ENCODE measurements at regions of chr7 and their contacts with region 1.

Region 1: DNA sequence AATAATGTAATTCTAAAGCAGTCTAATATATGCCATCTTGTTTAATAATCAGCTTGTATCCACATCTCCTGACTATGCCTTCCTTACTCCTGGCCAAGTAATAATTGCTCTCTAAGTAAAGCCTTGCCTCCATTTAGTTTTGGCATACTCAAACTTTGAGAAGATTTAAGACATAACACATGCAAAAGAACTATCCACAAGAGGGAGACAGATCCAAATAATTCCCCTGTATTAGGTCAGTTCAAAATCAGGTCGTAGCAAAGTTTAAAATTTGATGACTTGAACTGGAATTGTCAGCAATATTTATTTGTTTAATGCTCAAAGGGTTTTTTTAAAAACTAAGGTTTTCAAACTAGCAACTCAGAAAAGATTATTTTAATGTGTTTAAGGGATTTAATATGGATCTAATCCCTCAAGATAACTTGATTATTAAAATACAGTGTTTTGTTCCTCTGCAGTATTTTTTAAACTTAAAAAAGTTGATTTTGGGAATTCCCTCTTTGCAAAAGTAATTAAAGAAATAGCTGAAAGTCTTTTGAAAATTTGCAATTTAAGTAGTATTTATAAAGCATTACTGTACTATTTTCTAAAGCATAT is 95.3 kb downstream of the HDAC9 start:
- DNase-seq: peak; percentile 67
- ATAC-seq: peak; percentile 80
- H3K4me3 ChIP-seq: no peak overlapping the region
- H3K27ac ChIP-seq: no peak overlapping the region
- H3K4me1 ChIP-seq: 0 out of 2 replicates have a peak, but pooled peaks cover 1% of the 10 kb centered on the region
- H3K27me3 ChIP-seq: no peaks in the 10 kb centered on the region
- CTCF ChIP-seq: peak; percentile 68
- POLR2A ChIP-seq: no peak
- RAD21 ChIP-seq: peak; percentile 81

Region 2: DNA sequence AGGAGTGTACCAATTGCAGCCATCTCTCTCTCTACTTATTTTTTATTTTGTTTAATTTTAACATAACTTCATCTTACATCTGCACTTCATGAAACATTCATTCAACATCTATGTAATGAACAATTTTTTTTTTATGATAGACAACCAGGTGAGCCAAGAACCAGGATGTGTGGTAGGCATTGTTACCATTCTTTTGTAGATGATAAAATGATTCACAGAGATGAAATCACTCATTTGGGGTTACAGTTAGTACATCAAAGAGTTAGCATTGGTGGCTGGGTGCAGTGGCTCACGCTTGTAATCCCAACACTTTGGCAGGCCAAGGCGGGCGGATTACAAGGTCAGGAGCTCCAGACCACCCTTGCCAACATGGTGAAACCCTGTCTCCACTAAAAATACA is 32.5 kb after region 1 on chr7:
- CTCF ChIA-PET with region 1: no interaction called
- POLR2A ChIA-PET with region 1: no interaction called
- dilution Hi-C with region 1: no loop called
- in situ Hi-C with region 1: no loop called
- intact Hi-C with region 1: no loop called
- DNase-seq: no peak
- ATAC-seq: no peak
- H3K4me3 ChIP-seq: no peak overlapping the region
- H3K27ac ChIP-seq: no peak overlapping the region
- H3K4me1 ChIP-seq: no peaks in the 10 kb centered on the region
- H3K27me3 ChIP-seq: no peaks in the 10 kb centered on the region
- CTCF ChIP-seq: no peak
- POLR2A ChIP-seq: no peak
- RAD21 ChIP-seq: no peak

Region 3: DNA sequence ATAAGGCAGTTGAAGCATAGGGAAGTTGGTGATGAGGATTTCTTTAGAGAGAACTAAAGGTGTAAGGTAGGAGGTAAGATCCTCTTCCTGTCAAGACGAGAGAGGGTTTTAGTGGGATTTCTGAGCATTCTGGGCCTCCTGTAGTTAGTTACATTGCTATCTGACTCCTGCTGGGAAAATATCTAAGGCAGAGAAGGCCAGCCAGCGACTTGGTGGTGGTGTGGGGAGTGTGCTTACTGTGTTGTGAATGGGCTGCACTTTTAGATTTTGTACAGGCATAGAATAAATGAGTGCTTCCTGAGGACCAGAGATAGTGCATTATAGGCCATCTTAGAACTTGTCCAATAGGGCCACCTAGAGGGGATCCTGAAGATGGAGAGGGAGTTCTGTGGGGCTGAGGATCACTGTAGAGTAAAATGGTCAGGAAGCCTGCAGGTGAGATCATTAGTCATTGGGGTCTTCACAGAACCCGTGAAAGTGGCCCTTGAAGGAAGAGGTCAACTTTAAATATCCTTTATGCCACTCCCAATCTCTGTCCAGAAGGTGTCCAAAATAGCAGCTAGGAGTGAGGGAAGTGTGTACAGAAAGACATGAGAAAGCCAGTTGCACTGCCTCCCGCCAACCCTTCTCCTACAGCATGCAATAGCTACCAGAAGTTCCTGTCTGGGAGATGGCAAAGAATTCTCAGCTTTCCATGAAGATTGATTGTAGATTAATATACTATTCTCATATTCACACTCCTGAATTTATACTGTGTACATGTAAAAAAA is 851.4 kb after region 1 on chr7:
- CTCF ChIA-PET with region 1: no interaction called
- POLR2A ChIA-PET with region 1: no interaction called
- dilution Hi-C with region 1: no loop called
- in situ Hi-C with region 1: no loop called
- intact Hi-C with region 1: loop called (anchors 1 kb)
- DNase-seq: peak; percentile 75
- ATAC-seq: peak; percentile 99
- H3K4me3 ChIP-seq: no peak overlapping the region
- H3K27ac ChIP-seq: no peak overlapping the region
- H3K4me1 ChIP-seq: no peaks in the 10 kb centered on the region
- H3K27me3 ChIP-seq: no peaks in the 10 kb centered on the region
- CTCF ChIP-seq: peak; percentile 83
- POLR2A ChIP-seq: no peak
- RAD21 ChIP-seq: peak; percentile 91

Measured in IMR-90 (cell line).